Activated CD4-positive, alpha-beta T cell treated with anti-CD3 and anti-CD28 coated beads for 36 hours (primary cell): ENCODE measurements at regions of chr6 and their contacts with region 1.

Region 1: GRCh38 chr6:52162940-52163908 is 23.0 kb upstream of the IL17A start:
- DNase-seq: no peak
- ATAC-seq: peak; percentile 27
- H3K4me3 Mint-ChIP-seq: no peak overlapping the region
- H3K27ac Mint-ChIP-seq: peak overlapping the region; percentile 88
- H3K4me1 Mint-ChIP-seq: peaks cover 58% of the 10 kb centered on the region
- H3K27me3 Mint-ChIP-seq: peaks cover 14% of the 10 kb centered on the region

Region 2: DNA sequence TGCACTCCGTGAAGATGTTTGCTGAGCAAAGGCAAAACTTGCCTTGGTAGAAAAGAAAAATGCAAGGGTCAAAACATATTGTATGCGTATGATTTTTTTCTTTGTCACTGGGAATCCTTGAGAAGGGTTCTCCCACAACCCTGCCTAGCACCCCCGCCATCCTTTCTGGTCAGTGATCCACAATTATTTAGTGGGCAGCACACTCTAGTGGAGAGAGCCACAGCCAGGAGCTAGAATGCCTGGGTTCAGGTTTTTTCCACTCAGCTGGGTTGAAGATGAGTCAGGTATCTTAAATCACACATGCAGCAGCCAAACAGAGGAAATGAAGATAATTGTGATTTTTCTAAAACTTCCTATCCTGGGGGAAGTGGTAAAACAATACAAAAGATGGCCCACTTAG is 318.9 kb before region 1 on chr6:
- CTCF ChIA-PET with region 1: no interaction called
- POLR2A ChIA-PET with region 1: no interaction called
- intact Hi-C with region 1: no loop called
- DNase-seq: no peak
- ATAC-seq: no peak
- H3K4me3 Mint-ChIP-seq: no peak overlapping the region
- H3K27ac Mint-ChIP-seq: no peak overlapping the region
- H3K4me1 Mint-ChIP-seq: no peaks in the 10 kb centered on the region
- H3K27me3 Mint-ChIP-seq: peaks cover 2% of the 10 kb centered on the region

Region 3: GRCh38 chr6:52063584-52064344 is 99.5 kb before region 1 on chr6:
- CTCF ChIA-PET with region 1: interaction called, 4 read pairs
- POLR2A ChIA-PET with region 1: no interaction called
- intact Hi-C with region 1: loop called in 1 of 2 experiments (anchors 5 kb)
- DNase-seq: peak; percentile 79
- ATAC-seq: peak; percentile 99
- H3K4me3 Mint-ChIP-seq: no peak overlapping the region
- H3K27ac Mint-ChIP-seq: peak overlapping the region; percentile 77
- H3K4me1 Mint-ChIP-seq: peaks cover 12% of the 10 kb centered on the region
- H3K27me3 Mint-ChIP-seq: peaks cover 3% of the 10 kb centered on the region

Region 4: GRCh38 chr6:52115891-52116604 is 47.2 kb before region 1 on chr6:
- CTCF ChIA-PET with region 1: no interaction called
- POLR2A ChIA-PET with region 1: no interaction called
- intact Hi-C with region 1: no loop called
- DNase-seq: no peak
- ATAC-seq: no peak
- H3K4me3 Mint-ChIP-seq: no peak overlapping the region
- H3K27ac Mint-ChIP-seq: no peak overlapping the region
- H3K4me1 Mint-ChIP-seq: no peaks in the 10 kb centered on the region
- H3K27me3 Mint-ChIP-seq: peaks cover 26% of the 10 kb centered on the region

Region 5: DNA sequence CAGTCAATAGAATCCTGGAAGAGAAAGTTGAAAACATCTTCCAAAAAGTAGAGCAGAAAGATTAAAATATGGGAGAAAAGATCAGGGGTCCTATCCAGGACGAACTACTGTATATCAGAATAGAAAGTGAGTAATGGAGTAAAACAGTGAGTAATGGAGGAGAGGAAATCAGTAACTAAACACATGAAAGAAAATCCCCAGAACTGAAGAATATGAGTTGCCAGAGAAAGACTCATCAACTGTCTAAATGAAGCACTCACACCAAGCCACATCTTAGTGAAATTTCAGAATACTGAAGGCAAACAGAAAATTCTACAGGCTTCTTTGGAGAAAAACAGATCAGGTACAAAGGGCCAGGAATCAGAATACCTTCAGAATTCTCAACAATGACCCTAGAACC is 37.8 kb after region 1 on chr6:
- CTCF ChIA-PET with region 1: interaction called, 4 read pairs
- POLR2A ChIA-PET with region 1: no interaction called
- intact Hi-C with region 1: loop called (anchors 2 kb)
- DNase-seq: no peak
- ATAC-seq: peak; percentile 92
- H3K4me3 Mint-ChIP-seq: no peak overlapping the region
- H3K27ac Mint-ChIP-seq: peak overlapping the region; percentile 67
- H3K4me1 Mint-ChIP-seq: peaks cover 17% of the 10 kb centered on the region
- H3K27me3 Mint-ChIP-seq: peaks cover 28% of the 10 kb centered on the region

Region 6: DNA sequence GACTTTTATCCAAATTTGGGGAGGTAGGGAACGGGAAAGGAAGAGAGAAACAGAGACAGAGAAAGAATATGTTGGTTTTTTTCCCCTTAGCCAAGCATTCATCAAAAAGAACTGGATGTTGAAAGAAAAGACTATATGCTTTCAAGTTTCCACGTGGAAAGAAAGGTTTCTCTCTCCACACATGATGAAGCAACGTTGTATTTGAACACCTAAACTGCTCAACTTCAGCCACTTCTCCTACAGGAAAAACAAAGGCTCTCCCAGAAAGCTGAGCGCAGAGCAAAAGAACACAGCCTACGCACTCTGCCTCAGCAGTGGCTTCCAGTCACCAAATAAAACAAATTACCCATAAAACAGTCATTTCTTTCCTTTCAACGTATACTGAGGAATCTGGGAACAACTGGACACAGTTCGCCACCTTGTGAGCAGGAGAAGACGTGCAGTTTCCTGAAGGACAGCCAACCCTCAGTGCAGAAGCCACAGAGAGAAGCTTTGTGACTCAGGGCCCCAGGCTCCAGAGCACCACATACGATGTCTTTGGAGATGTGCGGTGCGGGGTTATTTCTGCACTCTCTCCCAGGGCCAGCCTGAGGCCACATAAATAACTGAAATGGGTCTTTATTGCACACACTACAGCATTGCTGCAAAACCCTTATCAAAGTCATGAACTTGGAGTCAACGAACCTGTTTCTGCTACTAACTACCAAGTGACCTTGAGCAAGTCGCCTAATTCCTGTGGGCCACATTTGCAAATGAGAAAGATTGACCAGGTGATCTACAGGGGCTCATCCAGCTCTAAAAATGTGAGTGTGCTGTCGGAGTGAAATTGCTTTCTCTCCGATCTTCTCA is 71.0 kb after region 1 on chr6:
- CTCF ChIA-PET with region 1: interaction called, 33 read pairs
- POLR2A ChIA-PET with region 1: interaction called, 4 read pairs
- intact Hi-C with region 1: loop called (anchors 1 kb)
- DNase-seq: peak; percentile 74
- ATAC-seq: peak; percentile 83
- H3K4me3 Mint-ChIP-seq: no peak overlapping the region
- H3K27ac Mint-ChIP-seq: no peak overlapping the region
- H3K4me1 Mint-ChIP-seq: peaks cover 21% of the 10 kb centered on the region
- H3K27me3 Mint-ChIP-seq: peaks cover 29% of the 10 kb centered on the region

Region 7: DNA sequence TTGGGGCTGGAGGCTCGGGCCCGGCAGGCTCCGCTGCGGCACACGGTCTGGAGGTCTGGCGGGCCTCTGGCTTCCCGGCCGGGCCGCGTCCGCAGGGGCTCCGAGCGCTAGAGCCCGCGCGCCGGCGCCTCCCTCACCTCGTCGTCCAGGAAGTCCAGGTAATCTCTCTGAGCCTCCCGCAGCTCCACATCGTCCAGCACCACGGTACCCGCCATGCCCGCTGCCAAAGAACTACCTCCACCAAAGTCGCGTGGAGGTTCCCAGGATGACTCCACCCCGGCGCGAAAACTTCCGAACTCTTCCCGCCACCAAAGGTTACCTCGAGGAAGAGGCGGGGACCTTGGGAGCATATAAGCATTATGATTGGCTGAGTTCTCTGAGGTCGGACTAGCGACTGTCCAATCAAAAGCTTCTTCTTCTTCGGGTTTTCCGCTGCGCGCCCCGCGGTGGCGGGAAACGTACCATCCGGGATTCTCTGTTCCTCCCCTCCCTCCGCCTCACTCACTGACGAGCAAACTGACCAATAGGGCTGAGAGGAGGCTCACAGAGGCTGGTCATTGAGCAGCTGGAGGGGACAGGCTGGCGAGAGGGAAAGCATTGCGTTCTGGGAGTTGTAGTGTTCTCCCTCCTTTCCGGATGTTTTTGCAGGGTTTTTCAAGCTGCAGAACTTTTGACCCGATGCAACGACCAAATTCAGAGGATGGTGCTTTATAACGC is 121.4 kb after region 1 on chr6 and contains the start of gene MCM3:
- CTCF ChIA-PET with region 1: interaction called, 9 read pairs
- POLR2A ChIA-PET with region 1: interaction called, 4 read pairs
- intact Hi-C with region 1: loop called (anchors 1 kb)
- DNase-seq: peak; percentile 98
- ATAC-seq: peak; percentile 97
- H3K4me3 Mint-ChIP-seq: no peak within 1 kb of the TSS
- H3K27ac Mint-ChIP-seq: peak within 1 kb of the TSS; percentile 82
- H3K4me1 Mint-ChIP-seq: peaks cover 47% of the 10 kb centered on the region
- H3K27me3 Mint-ChIP-seq: no peaks in the 10 kb centered on the region
- total RNA-seq, gene MCM3: 276 to 279 TPM

Region 8: GRCh38 chr6:52577022-52577777 is 414.0 kb after region 1 on chr6 and contains the start of gene TRAM2:
- CTCF ChIA-PET with region 1: no interaction called
- POLR2A ChIA-PET with region 1: no interaction called
- intact Hi-C with region 1: loop called in 1 of 2 experiments (anchors 5 kb)
- DNase-seq: peak; percentile 78
- ATAC-seq: peak; percentile 56
- H3K4me3 Mint-ChIP-seq: peak within 1 kb of the TSS; percentile 79
- H3K27ac Mint-ChIP-seq: peak within 1 kb of the TSS; percentile 80
- H3K4me1 Mint-ChIP-seq: peaks cover 43% of the 10 kb centered on the region
- H3K27me3 Mint-ChIP-seq: peaks cover 2% of the 10 kb centered on the region
- total RNA-seq, gene TRAM2: 3.5 to 3.6 TPM

Region 9: DNA sequence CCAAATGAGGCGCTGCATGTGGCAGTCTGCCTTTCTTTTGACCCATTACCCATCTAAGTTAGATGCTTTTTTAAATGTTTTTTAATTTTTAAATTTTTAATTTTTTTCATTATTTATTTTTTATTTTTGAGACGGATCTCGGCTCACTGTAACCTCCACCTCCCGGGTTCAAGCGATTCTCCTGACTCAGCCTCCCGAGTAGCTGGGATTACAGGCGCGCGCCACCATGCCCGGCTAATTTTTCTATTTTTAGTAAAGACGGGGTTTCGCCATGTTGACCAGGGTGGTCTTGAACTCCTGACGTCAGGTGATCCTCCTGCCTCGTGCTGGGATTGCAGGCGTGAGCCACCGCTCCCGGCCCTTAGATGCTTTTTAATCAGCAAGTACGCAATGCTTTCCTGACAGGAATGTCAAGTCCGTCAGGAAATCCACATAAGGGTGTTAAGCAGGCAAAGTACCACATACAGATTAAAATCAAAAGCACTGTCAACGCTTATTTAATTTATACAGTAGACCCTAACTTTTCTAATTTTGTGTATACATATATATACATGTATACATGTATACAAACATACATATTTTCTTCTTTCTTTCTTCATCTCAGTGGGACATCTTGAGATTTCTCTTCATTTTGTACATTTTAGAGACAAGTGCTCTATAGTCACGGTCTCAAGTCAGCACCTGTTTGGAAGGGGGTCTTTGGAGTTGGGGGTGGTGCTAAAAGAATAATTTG is 832.9 kb after region 1 on chr6:
- CTCF ChIA-PET with region 1: no interaction called
- POLR2A ChIA-PET with region 1: no interaction called
- intact Hi-C with region 1: loop called in 1 of 2 experiments (anchors 5 kb)
- DNase-seq: peak; percentile 68
- ATAC-seq: no peak
- H3K4me3 Mint-ChIP-seq: peak overlapping the region; percentile 83
- H3K27ac Mint-ChIP-seq: peak overlapping the region; percentile 77
- H3K4me1 Mint-ChIP-seq: peaks cover 32% of the 10 kb centered on the region
- H3K27me3 Mint-ChIP-seq: peaks cover 4% of the 10 kb centered on the region